ENCODE measurements at regions of chr5 and their contacts with region 1.

Region 1: DNA sequence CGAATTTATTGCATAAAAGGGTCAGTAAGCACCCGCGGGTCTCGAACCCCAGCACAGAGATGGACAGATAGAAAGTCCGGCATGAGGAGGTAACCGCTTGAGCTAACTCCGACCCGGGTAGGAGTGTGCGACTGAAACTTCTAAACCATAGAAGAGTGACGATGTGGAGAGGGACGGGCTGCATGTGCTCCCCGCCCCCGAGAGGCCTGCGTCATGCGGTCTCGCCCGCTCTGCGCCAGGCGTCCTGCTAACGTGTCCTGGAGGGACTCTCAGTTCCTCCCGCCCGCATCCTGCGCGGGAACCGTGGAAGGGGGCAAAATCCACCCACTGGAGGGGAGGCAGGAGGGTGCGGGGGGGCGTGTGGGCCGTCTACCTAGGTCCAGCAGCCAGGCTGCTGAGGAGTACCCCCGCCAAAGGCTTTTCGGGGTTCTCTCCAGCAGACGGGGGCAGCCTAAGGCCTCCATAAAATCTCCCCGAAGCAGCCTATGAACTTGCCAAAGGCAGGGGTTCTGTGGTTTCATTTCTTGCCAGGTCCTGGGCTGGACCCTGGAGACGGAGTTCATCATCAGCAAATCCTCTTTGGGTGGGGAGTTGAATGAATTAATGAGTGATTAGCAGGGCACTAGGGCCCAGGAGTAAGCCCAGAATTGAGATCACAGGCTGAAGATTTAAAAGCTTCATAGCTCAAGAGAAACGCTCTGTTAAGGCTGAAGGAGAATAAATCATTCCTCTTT is 51.9 kb downstream of the TGFBI start:
- DNase-seq: peak; percentile 81
- ATAC-seq: peak; percentile 96
- H3K4me3 Mint-ChIP-seq: peak overlapping the region; percentile 48
- H3K27ac Mint-ChIP-seq: no peak overlapping the region
- H3K4me1 Mint-ChIP-seq: peaks cover 7% of the 10 kb centered on the region
- H3K27me3 Mint-ChIP-seq: peaks cover 49% of the 10 kb centered on the region

Region 2: DNA sequence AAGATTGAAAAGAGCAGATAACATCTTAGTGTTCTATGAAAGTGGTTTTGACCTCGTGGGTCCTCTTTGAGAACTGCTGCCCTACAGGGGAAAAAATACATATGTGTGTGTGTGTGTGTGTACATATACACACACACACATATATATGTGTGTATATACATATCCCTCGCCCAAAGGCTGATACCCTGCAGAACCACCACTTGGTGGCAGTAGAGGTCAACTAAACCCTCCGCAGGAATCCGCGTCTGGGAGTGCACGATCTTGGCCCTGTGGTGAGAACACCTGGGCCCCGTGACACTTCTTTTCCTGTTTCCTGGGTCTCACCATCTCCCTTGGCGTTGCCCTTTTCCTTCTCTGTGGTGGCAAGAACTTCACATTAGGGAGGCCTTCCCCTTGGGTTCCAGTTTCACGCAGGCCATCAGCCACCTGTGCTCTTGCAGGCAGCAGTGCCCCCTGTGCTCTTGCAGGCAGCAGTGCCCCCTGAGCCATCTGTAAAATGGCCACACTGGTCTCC is 193.2 kb before region 1 on chr5:
- CTCF ChIA-PET with region 1: interaction called, 22 read pairs
- DNase-seq: peak; percentile 76
- ATAC-seq: peak; percentile 91
- H3K4me3 Mint-ChIP-seq: no peak overlapping the region
- H3K27ac Mint-ChIP-seq: no peak overlapping the region
- H3K4me1 Mint-ChIP-seq: peaks cover 20% of the 10 kb centered on the region
- H3K27me3 Mint-ChIP-seq: peaks cover 73% of the 10 kb centered on the region

Region 3: GRCh38 chr5:135942200-135942771 is 138.4 kb before region 1 on chr5:
- CTCF ChIA-PET with region 1: interaction called, 14 read pairs
- DNase-seq: no peak
- ATAC-seq: no peak
- H3K4me3 Mint-ChIP-seq: no peak overlapping the region
- H3K27ac Mint-ChIP-seq: no peak overlapping the region
- H3K4me1 Mint-ChIP-seq: no peaks in the 10 kb centered on the region
- H3K27me3 Mint-ChIP-seq: peaks cover 44% of the 10 kb centered on the region

Region 4: DNA sequence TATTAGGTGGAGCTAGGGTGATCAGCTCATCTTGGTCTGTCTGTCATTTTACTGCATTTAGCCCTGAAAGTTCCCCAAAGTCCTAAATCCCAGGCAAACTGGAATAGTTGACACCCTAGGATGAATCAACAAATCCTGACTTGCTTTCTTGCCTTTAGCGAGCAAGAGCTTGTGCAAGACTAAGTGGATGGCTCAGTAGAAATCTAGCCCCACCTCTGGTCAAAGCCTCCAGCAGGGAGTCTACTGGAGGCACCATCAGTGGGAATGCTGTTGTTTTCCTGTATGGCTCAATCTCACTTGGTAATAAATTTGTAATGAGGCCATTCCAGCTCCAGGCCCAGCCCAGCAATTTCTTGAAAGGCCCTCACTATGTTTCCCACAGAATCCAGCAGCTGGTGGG is 328.4 kb after region 1 on chr5:
- CTCF ChIA-PET with region 1: no interaction called
- DNase-seq: no peak
- ATAC-seq: no peak
- H3K4me3 Mint-ChIP-seq: no peak overlapping the region
- H3K27ac Mint-ChIP-seq: no peak overlapping the region
- H3K4me1 Mint-ChIP-seq: no peaks in the 10 kb centered on the region
- H3K27me3 Mint-ChIP-seq: no peaks in the 10 kb centered on the region

Measured in activated CD8-positive, alpha-beta memory T cell treated with anti-CD3 and anti-CD28 coated beads, Interleukin-2, amount 10 ng/mL, durations not matched to agents 7 days and 5 days (primary cell).